Activated CD4-positive, alpha-beta memory T cell treated with anti-CD3 and anti-CD28 coated beads for 36 hours (primary cell): ENCODE measurements at regions of chr16 and their contacts with region 1.

Region 1: GRCh38 chr16:71734511-71734910 is 10.0 kb upstream of the PHLPP2 start:
- DNase-seq: no peak
- H3K4me3 Mint-ChIP-seq: no peak overlapping the region
- H3K27ac Mint-ChIP-seq: no peak overlapping the region
- H3K4me1 Mint-ChIP-seq: peaks cover 3% of the 10 kb centered on the region
- H3K27me3 Mint-ChIP-seq: no peaks in the 10 kb centered on the region

Region 2: GRCh38 chr16:71746442-71747046 is 12.0 kb after region 1 on chr16:
- CTCF ChIA-PET with region 1: interaction called, 12 read pairs
- POLR2A ChIA-PET with region 1: no interaction called
- intact Hi-C with region 1: no loop called
- DNase-seq: no peak
- H3K4me3 Mint-ChIP-seq: no peak overlapping the region
- H3K27ac Mint-ChIP-seq: no peak overlapping the region
- H3K4me1 Mint-ChIP-seq: peaks cover 4% of the 10 kb centered on the region
- H3K27me3 Mint-ChIP-seq: no peaks in the 10 kb centered on the region